Caco-2 (cell line): ENCODE measurements at regions of chr2 and their contacts with region 1.

Region 1: DNA sequence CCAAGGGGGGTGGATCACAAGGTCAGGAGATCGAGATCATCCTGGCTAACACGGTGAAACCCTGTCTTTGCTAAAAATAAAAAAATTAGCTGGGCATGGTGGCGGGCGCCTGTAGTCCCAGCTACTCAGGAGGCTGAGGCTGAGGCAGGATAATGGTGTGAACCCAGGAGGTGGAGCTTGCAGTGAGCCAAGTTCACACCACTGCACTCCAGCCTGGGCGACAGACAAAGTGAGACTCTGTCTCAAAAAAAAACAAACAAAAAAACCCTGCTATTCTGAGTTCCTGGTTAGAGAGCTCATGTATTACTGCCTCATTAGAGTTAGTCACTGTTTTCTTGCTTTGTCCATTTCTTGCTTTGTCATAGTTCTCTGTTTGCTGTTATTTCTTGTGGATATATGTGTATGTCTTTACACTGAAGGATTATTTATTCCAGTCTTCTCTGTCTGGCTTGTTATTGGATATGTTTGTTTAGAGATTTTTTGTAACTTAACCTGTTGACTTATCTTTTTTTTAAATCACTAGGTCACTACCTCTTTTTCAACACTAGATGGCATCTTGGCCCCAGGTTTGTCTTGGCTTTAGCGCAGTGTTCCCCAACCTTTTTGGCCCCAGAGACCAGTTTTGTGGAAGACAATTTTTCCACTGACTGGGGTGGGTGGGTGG is 17.0 kb downstream of the TTLL4 start:
- DNase-seq: no peak
- H3K4me3 ChIP-seq: no peak overlapping the region
- H3K4me3 Mint-ChIP-seq: no peak overlapping the region
- H3K27ac Mint-ChIP-seq: no peak overlapping the region
- H3K4me1 ChIP-seq: peaks cover 7% of the 10 kb centered on the region; the same call in 1 of the 2 replicates
- H3K4me1 Mint-ChIP-seq: peaks cover 7% of the 10 kb centered on the region
- H3K27me3 ChIP-seq: no peaks in the 10 kb centered on the region
- H3K27me3 Mint-ChIP-seq: no peaks in the 10 kb centered on the region
- CTCF ChIP-seq: peak; percentile 23 to 37

Region 2: DNA sequence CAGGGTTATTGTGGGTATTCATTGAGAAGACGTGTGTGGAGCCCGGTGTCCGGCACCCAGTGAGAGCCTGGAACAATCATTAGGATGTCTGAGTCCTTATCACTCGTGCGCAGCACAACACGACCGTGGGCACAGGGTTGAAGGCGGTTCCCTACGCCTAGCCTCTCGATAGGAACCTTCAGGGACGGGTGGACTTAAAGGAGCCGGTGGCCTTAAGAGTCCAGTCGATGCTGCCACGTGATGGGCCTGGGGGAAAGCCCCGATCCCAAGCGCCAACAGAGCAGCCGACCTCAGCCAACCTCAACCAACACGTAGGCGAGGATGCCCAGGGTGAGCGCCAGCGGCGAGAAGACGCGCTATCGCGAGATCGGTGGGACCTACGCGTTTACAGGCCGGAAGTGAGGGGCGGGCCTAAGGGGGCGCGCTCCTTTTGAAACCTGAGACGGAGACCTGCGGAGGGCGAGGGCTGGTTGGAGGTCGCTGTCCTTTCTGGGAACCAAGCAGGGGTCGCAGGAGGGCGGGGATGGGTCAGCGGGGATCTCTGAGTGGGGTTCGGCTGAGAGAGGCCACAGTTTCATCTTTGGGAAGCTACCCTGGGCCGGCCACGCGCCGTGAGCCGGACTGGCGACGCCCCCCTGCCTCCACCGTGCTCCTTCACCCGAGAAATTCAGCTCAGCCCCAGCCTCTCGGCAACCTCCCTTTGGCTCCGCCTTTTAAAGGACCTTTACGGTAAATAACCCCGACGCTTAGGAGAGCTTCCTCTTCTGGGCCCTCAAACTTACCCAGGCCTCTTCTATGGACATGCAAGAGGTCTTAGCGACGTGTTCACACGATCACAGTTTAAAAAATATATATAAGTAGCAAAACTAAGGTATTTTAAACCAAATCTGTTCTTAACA is 181.3 kb after region 1 on chr2:
- CTCF ChIA-PET with region 1: no interaction called
- POLR2A ChIA-PET with region 1: interaction called, 10 read pairs
- intact Hi-C with region 1: no loop called
- DNase-seq: peak; percentile 96 to 97
- H3K4me3 ChIP-seq: peak overlapping the region; percentile 74
- H3K4me3 Mint-ChIP-seq: peak overlapping the region; percentile 85
- H3K27ac Mint-ChIP-seq: peak overlapping the region; percentile 84
- H3K4me1 ChIP-seq: peaks cover 9% of the 10 kb centered on the region; the same call in 1 of the 2 replicates
- H3K4me1 Mint-ChIP-seq: peaks cover 8% of the 10 kb centered on the region
- H3K27me3 ChIP-seq: no peaks in the 10 kb centered on the region
- H3K27me3 Mint-ChIP-seq: peaks cover 3% of the 10 kb centered on the region
- CTCF ChIP-seq: no peak